Caco-2 (cell line): ENCODE measurements at regions of chr6 and their contacts with region 1.

Region 1: DNA sequence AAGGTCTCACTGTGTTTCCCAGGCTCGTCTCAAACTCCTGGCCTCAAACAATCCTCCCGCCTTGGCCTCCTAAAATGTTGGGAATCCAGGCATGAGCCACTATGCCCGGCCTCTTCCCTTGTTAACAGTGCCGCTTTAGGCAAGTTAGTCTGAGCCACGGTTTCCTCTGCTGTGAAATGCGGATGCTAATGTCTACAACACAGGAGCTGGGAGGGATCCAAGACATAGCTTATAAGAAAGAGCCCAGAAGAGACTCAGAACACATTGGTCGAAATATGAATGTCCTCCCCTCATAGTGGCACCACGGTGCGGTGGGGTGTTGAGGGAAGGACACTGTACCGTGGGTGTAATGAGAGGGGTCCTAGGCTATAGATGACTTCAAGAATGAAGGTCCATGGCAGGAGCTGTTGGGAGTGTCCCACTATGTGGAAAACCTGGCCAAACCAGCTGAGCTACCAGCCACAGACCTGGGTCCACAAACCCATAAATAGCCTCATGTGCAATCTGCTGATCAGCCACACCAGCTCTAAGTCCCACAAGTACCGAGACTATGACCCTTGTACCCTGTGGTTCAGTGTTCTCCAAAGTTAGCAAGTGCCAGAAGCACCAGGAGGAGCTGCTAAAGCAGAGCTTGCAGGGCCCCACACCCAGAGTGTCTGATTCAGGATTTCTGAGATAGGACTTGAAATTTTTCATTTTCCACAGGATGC is 57.8 kb upstream of the ZFAND3 start:
- DNase-seq: peak; percentile 52 to 59
- H3K4me3 ChIP-seq: no peak overlapping the region
- H3K4me3 Mint-ChIP-seq: no peak overlapping the region
- H3K27ac Mint-ChIP-seq: no peak overlapping the region
- H3K4me1 ChIP-seq: peaks cover 28% of the 10 kb centered on the region
- H3K4me1 Mint-ChIP-seq: peaks cover 19% of the 10 kb centered on the region
- H3K27me3 ChIP-seq: no peaks in the 10 kb centered on the region
- H3K27me3 Mint-ChIP-seq: no peaks in the 10 kb centered on the region
- CTCF ChIP-seq: no peak

Region 2: DNA sequence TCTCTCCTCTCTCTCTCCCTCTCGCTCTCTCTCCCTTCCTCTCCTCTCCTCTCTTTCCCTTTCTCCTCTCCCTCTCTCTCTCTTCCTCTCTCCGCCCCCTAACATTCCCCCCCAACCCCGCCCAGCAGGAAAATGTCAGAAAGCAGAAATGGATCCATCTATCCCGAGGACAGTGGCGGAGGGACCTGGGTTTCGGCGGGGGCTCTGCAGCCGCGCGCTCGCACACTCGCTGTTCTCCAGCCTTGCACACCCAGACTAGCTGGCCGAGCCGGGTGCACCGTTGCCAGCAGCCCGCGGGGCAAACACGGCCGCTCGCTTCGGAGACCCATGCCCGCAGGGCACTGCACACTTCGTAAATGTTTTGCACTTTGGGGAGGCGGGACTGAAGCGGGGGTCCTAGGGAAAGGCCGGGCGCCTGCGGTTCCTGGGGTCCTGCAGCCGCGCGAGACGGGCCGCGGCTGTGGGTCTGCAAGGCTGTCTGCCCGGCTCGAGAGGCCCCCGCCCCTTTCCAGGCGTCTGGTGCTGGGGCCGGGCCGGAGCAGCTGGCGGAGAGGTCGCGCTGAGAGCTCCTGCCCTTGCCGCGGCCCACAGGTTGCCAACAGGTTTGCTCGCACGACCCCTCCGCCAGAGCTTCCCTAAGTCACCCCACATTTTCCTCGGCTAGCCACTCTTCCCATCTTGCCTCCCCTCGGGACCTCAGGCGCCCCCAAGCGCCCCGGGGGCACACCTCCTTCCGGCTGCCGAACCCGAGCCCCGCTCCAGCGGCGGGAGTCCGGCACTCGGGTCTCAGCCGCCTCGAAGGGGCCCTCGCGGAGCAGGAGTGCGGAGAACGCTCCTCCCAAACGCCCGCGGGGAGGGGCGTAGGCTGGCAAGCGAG is 63.2 kb before region 1 on chr6:
- CTCF ChIA-PET with region 1: no interaction called
- POLR2A ChIA-PET with region 1: no interaction called
- intact Hi-C with region 1: loop called (anchors 2 kb)
- DNase-seq: peak; percentile 55 to 73
- H3K4me3 ChIP-seq: peak overlapping the region; percentile 50
- H3K4me3 Mint-ChIP-seq: peak overlapping the region; percentile 84
- H3K27ac Mint-ChIP-seq: no peak overlapping the region
- H3K4me1 ChIP-seq: peaks cover 17% of the 10 kb centered on the region
- H3K4me1 Mint-ChIP-seq: peaks cover 11% of the 10 kb centered on the region
- H3K27me3 ChIP-seq: peaks cover 11% of the 10 kb centered on the region
- H3K27me3 Mint-ChIP-seq: peaks cover 40% of the 10 kb centered on the region
- CTCF ChIP-seq: no peak

Region 3: GRCh38 chr6:37741757-37742400 is 19.8 kb before region 1 on chr6:
- CTCF ChIA-PET with region 1: interaction called, 7 read pairs
- POLR2A ChIA-PET with region 1: no interaction called
- intact Hi-C with region 1: loop called (anchors 1 kb)
- DNase-seq: peak in 1 of 2 experiments; percentile 41
- H3K4me3 ChIP-seq: no peak overlapping the region
- H3K4me3 Mint-ChIP-seq: no peak overlapping the region
- H3K27ac Mint-ChIP-seq: no peak overlapping the region
- H3K4me1 ChIP-seq: no peaks in the 10 kb centered on the region
- H3K4me1 Mint-ChIP-seq: no peaks in the 10 kb centered on the region
- H3K27me3 ChIP-seq: no peaks in the 10 kb centered on the region
- H3K27me3 Mint-ChIP-seq: peaks cover 3% of the 10 kb centered on the region
- CTCF ChIP-seq: peak in 1 of 2 experiments; percentile 71

Region 4: GRCh38 chr6:38051819-38052434 is 290.2 kb after region 1 on chr6:
- CTCF ChIA-PET with region 1: no interaction called
- POLR2A ChIA-PET with region 1: no interaction called
- intact Hi-C with region 1: no loop called
- DNase-seq: no peak
- H3K4me3 ChIP-seq: no peak overlapping the region
- H3K4me3 Mint-ChIP-seq: no peak overlapping the region
- H3K27ac Mint-ChIP-seq: no peak overlapping the region
- H3K4me1 ChIP-seq: no peaks in the 10 kb centered on the region
- H3K4me1 Mint-ChIP-seq: peaks cover 14% of the 10 kb centered on the region
- H3K27me3 ChIP-seq: no peaks in the 10 kb centered on the region
- H3K27me3 Mint-ChIP-seq: no peaks in the 10 kb centered on the region
- CTCF ChIP-seq: no peak

Region 5: GRCh38 chr6:38279420-38279819 is 517.7 kb after region 1 on chr6:
- CTCF ChIA-PET with region 1: no interaction called
- POLR2A ChIA-PET with region 1: no interaction called
- intact Hi-C with region 1: no loop called
- DNase-seq: no peak
- H3K4me3 ChIP-seq: no peak overlapping the region
- H3K4me3 Mint-ChIP-seq: no peak overlapping the region
- H3K27ac Mint-ChIP-seq: no peak overlapping the region
- H3K4me1 ChIP-seq: no peaks in the 10 kb centered on the region
- H3K4me1 Mint-ChIP-seq: peaks cover 2% of the 10 kb centered on the region
- H3K27me3 ChIP-seq: no peaks in the 10 kb centered on the region
- H3K27me3 Mint-ChIP-seq: no peaks in the 10 kb centered on the region
- CTCF ChIP-seq: peak; percentile 10 to 17